ENCODE measurements at regions of chr7 and their contacts with region 1.

Region 1: GRCh38 chr7:26686448-26686981 is 177.9 kb downstream of the SKAP2 start:
- DNase-seq: no peak
- H3K4me3 Mint-ChIP-seq: no peak overlapping the region
- H3K27ac Mint-ChIP-seq: no peak overlapping the region
- H3K4me1 Mint-ChIP-seq: no peaks in the 10 kb centered on the region
- H3K27me3 Mint-ChIP-seq: peaks cover 13% of the 10 kb centered on the region

Region 2: DNA sequence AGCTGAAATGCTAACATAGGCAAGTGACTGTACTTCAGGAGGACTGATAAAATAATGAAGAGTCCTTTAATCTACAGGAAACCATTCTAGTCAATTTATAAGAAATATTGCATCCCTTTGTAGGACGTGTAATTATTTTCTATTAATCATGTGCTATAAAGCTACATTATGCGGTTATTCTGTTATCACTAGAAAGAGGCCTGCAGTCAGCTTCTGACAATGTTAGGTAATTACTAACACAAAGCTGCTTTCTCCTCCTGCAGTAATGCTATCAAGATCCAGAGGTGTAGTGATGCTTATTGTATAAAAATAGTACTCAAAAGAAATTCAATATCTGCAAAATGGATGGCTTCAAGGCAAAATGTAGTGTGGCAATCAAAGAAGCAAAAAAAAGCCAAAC is 13.2 kb before region 1 on chr7:
- CTCF ChIA-PET with region 1: interaction called, 15 read pairs
- POLR2A ChIA-PET with region 1: no interaction called
- intact Hi-C with region 1: no loop called
- DNase-seq: no peak
- H3K4me3 Mint-ChIP-seq: no peak overlapping the region
- H3K27ac Mint-ChIP-seq: no peak overlapping the region
- H3K4me1 Mint-ChIP-seq: no peaks in the 10 kb centered on the region
- H3K27me3 Mint-ChIP-seq: peaks cover 5% of the 10 kb centered on the region

Measured in activated CD4-positive, alpha-beta memory T cell treated with anti-CD3 and anti-CD28 coated beads for 36 hours (primary cell).